ENCODE measurements at regions of chr2 and their contacts with region 1.

Region 1: GRCh38 chr2:144937910-144938709 is 418.2 kb upstream of the ZEB2 start:
- DNase-seq: no peak
- H3K4me3 ChIP-seq: no peak overlapping the region
- CTCF ChIP-seq: no peak
- POLR2A ChIP-seq: no peak

Region 2: GRCh38 chr2:145760781-145761649 is 822.9 kb after region 1 on chr2:
- intact Hi-C with region 1: loop called (anchors 5 kb)
- DNase-seq: no peak
- H3K4me3 ChIP-seq: no peak overlapping the region
- CTCF ChIP-seq: no peak
- POLR2A ChIP-seq: no peak

Measured in lower leg skin (tissue), 4 donors.